Colonic mucosa (tissue), 4 donors: ENCODE measurements at regions of chr1 and their contacts with region 1.

Region 1: DNA sequence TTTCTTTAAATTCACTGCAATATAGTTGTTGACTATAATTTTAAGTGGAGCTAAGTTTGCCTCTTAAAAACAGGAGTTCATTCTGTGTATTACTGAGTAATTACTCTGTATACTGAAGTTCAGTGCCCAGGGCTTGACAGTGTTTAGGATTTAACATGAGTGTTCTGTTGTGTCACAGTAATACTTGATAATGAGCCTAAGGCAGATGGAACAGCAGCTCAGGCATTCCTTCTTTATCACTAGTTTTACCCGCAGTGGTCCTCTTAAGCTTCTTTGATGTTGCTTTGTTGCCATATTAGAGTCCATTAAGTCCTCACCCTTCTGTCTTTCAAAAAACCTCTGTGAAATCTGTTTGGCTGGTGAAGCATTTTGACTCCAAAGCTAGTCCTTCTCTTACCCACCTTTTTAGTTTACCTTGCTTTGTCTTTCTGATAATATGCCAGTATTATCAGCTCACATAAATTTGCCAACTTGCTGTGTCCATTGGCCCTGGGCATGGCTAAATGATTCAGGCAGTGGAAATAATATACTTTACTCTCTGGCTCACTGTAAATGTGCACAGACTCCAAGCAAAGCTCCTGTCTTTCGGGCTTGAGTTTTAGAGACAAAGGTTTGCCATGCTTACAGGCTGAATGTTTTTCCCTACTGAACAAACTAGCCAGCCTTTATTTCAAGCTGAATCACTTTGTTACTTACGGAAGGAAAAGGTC is 17.7 kb downstream of the HIPK1 start:
- DNase-seq: no peak
- H3K4me3 ChIP-seq: no peak overlapping the region
- H3K27ac ChIP-seq: peak overlapping the region; percentile 27
- H3K4me1 ChIP-seq: no peaks in the 10 kb centered on the region
- H3K27me3 ChIP-seq: no peaks in the 10 kb centered on the region
- CTCF ChIP-seq: no peak

Region 2: GRCh38 chr1:113701429-113701828 is 245.4 kb before region 1 on chr1:
- intact Hi-C with region 1: no loop called
- DNase-seq: no peak
- H3K4me3 ChIP-seq: no peak overlapping the region
- H3K27ac ChIP-seq: no peak overlapping the region
- H3K4me1 ChIP-seq: no peaks in the 10 kb centered on the region
- H3K27me3 ChIP-seq: no peaks in the 10 kb centered on the region
- CTCF ChIP-seq: no peak

Region 3: DNA sequence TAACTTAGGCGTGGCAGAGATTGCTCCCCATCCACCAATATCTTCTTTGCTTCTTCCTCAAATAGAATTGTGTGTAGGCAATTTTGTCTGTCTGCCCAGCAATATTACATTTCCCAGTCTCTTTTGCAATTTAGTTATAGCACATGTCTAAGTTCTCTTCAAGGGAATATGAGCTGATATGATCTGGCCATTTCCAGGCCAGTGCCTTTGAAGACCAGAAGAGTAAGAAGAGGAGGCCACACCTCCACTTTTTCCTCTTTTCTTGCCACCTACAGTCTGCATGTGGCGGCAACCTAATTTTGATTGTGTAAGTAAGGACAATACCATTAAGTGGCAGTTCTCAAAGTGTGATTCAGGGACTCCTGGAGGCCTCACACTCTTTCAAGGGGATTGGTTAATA is 128.3 kb before region 1 on chr1:
- intact Hi-C with region 1: no loop called
- DNase-seq: no peak
- H3K4me3 ChIP-seq: no peak overlapping the region
- H3K27ac ChIP-seq: no peak overlapping the region
- H3K4me1 ChIP-seq: no peaks in the 10 kb centered on the region
- H3K27me3 ChIP-seq: no peaks in the 10 kb centered on the region
- CTCF ChIP-seq: no peak

Region 4: GRCh38 chr1:113928941-113929749 is 17.7 kb before region 1 on chr1 and contains the start of gene HIPK1:
- intact Hi-C with region 1: loop called (anchors 2 kb)
- DNase-seq: peak; percentile 95
- H3K4me3 ChIP-seq: peak within 1 kb of the TSS; percentile 86
- H3K27ac ChIP-seq: peak within 1 kb of the TSS; percentile 96
- H3K4me1 ChIP-seq: peaks cover under 1% of the 10 kb centered on the region
- H3K27me3 ChIP-seq: no peaks in the 10 kb centered on the region
- CTCF ChIP-seq: no peak
- total RNA-seq, gene HIPK1: 61.2 to 91.2 TPM